Right cardiac atrium (tissue), 5 donors: ENCODE measurements at regions of chr6 and their contacts with region 1.

Region 1: GRCh38 chr6:125790358-125791150 is at the start of gene NCOA7:
- DNase-seq: peak; percentile 85 to 94 (median 93)
- ATAC-seq: peak; percentile 96 to 97
- H3K4me3 ChIP-seq: peak within 1 kb of the TSS; percentile 89
- H3K27ac ChIP-seq: peak within 1 kb of the TSS; percentile 97
- H3K4me1 ChIP-seq: peaks cover 5% of the 10 kb centered on the region
- H3K27me3 ChIP-seq: no peaks in the 10 kb centered on the region
- total RNA-seq, gene NCOA7: 12.6 to 18.6 (median 17.0) TPM

Region 2: DNA sequence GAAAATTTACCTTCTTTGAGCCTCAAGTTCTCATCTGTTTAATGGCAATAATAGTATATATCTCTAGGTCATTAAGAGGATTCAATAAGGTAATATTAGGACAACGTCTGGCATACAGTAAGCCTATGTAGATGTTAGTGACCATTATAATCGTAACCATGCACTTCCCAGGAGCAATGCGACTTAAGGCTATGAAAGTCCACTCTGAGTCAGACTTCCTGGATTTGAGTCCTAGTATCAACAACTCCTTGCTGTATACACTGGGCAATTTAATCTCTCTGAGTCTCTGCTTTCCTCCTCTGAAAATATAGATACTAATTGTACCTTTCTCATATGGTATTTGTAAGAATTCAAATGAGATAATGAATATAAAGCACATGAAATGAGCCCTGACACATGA is 320.6 kb before region 1 on chr6:
- intact Hi-C with region 1: no loop called
- DNase-seq: no peak
- ATAC-seq: no peak
- H3K4me3 ChIP-seq: no peak overlapping the region
- H3K27ac ChIP-seq: no peak overlapping the region
- H3K4me1 ChIP-seq: no peaks in the 10 kb centered on the region
- H3K27me3 ChIP-seq: no peaks in the 10 kb centered on the region

Region 3: DNA sequence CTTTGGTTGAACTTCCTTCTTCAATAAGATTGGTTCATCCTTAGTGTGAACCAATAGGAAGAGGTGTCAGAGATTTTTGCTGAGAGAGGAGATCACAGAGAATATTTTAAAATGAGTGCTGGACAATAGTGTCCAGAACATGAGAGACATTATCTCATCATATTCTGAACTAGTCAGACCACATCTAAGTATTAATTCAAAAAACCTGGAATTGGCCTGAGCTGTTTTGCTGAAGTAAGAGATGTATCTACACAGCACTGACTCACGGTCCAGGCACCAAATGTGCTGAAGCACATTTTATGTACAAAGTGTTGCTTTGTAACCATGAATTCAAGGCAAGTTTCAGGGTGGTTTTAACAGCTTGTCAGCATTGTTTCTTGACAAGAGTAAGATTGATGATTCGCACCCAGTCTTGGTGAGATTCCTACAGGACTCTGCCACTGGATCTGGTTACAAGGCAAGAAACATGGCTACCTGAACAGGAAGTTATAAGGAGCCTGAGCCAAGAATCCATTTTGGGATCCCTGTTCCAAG is 219.3 kb before region 1 on chr6:
- intact Hi-C with region 1: no loop called
- DNase-seq: no peak
- ATAC-seq: no peak
- H3K4me3 ChIP-seq: no peak overlapping the region
- H3K27ac ChIP-seq: no peak overlapping the region
- H3K4me1 ChIP-seq: no peaks in the 10 kb centered on the region
- H3K27me3 ChIP-seq: no peaks in the 10 kb centered on the region

Region 4: GRCh38 chr6:125749173-125749864 is 41.2 kb before region 1 on chr6 and contains the start of gene HEY2:
- intact Hi-C with region 1: no loop called
- DNase-seq: peak; percentile 95 to 98 (median 98)
- ATAC-seq: peak; percentile 97 to 98
- H3K4me3 ChIP-seq: peak within 1 kb of the TSS; percentile 66
- H3K27ac ChIP-seq: peak within 1 kb of the TSS; percentile 78
- H3K4me1 ChIP-seq: no peaks in the 10 kb centered on the region
- H3K27me3 ChIP-seq: no peaks in the 10 kb centered on the region
- total RNA-seq, gene HEY2: 2.6 to 6.0 (median 3.7) TPM

Region 5: DNA sequence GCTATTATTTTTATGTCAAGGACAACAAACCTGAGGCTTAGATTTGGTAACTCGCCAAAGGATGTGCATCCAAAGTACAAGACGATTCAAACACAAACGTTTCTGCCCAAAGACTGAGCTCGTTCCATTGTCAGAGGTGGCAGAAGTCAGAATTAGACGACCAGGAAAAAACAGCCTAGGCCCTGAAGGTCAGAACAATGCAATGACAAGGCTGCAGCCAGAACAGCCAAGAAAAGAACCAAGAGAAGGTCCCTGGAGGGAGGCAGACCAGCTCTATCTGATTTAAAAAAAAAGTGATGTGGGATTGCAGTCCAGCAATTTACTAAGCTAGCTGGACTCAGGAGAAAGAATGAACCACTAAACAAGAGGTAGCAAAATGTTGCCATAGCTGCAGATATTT is 54.4 kb after region 1 on chr6:
- intact Hi-C with region 1: loop called in 1 of 4 experiments (anchors 10 kb)
- DNase-seq: peak in 2 of 3 donors; percentile 25 to 60
- ATAC-seq: peak; percentile 89 to 93
- H3K4me3 ChIP-seq: no peak overlapping the region
- H3K27ac ChIP-seq: peak overlapping the region; percentile 78
- H3K4me1 ChIP-seq: peaks cover 6% of the 10 kb centered on the region
- H3K27me3 ChIP-seq: no peaks in the 10 kb centered on the region

Region 6: GRCh38 chr6:125867483-125867935 is 77.0 kb after region 1 on chr6:
- intact Hi-C with region 1: loop called in 1 of 4 experiments (anchors 5 kb)
- DNase-seq: no peak
- ATAC-seq: no peak
- H3K4me3 ChIP-seq: no peak overlapping the region
- H3K27ac ChIP-seq: no peak overlapping the region
- H3K4me1 ChIP-seq: peaks cover 4% of the 10 kb centered on the region
- H3K27me3 ChIP-seq: no peaks in the 10 kb centered on the region